CD8-positive, alpha-beta memory T cell (primary cell): ENCODE measurements at regions of chr17 and their contacts with region 1.

Region 1: GRCh38 chr17:79810130-79811010 is 13.5 kb upstream of the CBX8 start:
- DNase-seq: peak; percentile 69 to 85 (median 76)
- H3K4me3 ChIP-seq: no peak overlapping the region
- H3K4me3 Mint-ChIP-seq: peak overlapping the region in 4 of 7 donors; percentile 44 to 83 (median 50)
- H3K27ac ChIP-seq: no peak overlapping the region
- H3K27ac Mint-ChIP-seq: peak overlapping the region in 3 of 8 donors; percentile 21 to 93 (median 66)
- H3K4me1 ChIP-seq: peaks cover 37% of the 10 kb centered on the region
- H3K4me1 Mint-ChIP-seq: peaks cover 21 to 34% (median 30%) of the 10 kb centered on the region in 3 donors
- H3K27me3 ChIP-seq: peaks cover 76% of the 10 kb centered on the region
- H3K27me3 Mint-ChIP-seq: peaks cover 58 to 64% of the 10 kb centered on the region in 2 donors

Region 2: GRCh38 chr17:79796763-79797491 is 13.4 kb before region 1 on chr17 and contains the start of gene CBX8:
- CTCF ChIA-PET with region 1: interaction called, 24 read pairs
- POLR2A ChIA-PET with region 1: interaction called, 7 read pairs
- DNase-seq: peak; percentile 97 to 99 (median 98)
- H3K4me3 ChIP-seq: peak within 1 kb of the TSS; percentile 80
- H3K4me3 Mint-ChIP-seq: peak within 1 kb of the TSS; percentile 85 to 92 (median 86)
- H3K27ac ChIP-seq: peak within 1 kb of the TSS; percentile 73
- H3K27ac Mint-ChIP-seq: peak within 1 kb of the TSS; percentile 50 to 94 (median 88)
- H3K4me1 ChIP-seq: peaks cover 50% of the 10 kb centered on the region
- H3K4me1 Mint-ChIP-seq: peaks cover 31 to 52% (median 34%) of the 10 kb centered on the region in 3 donors
- H3K27me3 ChIP-seq: peaks cover 44% of the 10 kb centered on the region
- H3K27me3 Mint-ChIP-seq: peaks cover 43 to 45% of the 10 kb centered on the region in 2 donors
- total RNA-seq, gene CBX8: 1.9 to 2.2 TPM

Region 3: DNA sequence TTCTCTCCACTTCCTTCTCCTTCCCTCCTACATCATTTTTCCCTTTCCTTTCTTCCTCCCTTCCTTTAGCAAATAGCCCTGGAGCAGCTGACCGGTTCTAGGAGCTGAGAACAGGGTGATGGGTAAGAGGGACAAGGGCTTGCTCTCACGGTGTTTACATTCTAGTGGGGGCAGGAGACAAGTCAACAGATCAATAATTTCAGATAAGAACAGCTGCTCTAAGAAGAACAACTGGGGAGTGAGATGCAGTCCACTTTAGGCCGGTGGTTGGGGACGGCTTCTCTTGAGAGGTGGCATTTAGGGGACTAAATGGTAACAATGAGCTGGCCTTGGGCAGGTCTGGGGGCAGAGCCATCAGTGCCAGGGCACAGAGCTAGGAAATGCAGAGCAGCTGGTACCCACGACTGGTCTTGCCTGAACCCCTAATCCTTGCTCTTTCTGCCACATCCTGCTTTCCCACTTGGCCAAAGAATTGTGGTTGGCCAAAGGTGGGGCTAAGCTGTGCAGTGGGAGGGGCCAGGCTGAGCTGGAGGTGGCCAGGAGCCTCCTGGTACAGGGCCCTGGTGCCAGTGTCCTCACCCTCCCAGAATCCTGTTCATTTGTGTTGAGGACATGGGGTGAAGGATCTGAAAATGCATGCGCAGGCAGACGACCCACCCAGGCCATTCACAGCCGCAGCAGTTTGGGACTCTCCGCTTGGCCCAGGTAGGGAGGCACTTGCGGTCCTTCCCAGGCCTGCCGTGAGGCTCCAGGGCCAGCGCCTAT is 11.1 kb after region 1 on chr17:
- CTCF ChIA-PET with region 1: no interaction called
- POLR2A ChIA-PET with region 1: no interaction called
- DNase-seq: no peak
- H3K4me3 ChIP-seq: no peak overlapping the region
- H3K4me3 Mint-ChIP-seq: no peak overlapping the region
- H3K27ac ChIP-seq: no peak overlapping the region
- H3K27ac Mint-ChIP-seq: no peak overlapping the region
- H3K4me1 ChIP-seq: no peaks in the 10 kb centered on the region
- H3K4me1 Mint-ChIP-seq: peaks cover 0 to 6% (median 4%) of the 10 kb centered on the region in 3 donors
- H3K27me3 ChIP-seq: peaks cover 4% of the 10 kb centered on the region
- H3K27me3 Mint-ChIP-seq: peaks cover 20 to 25% of the 10 kb centered on the region in 2 donors

Region 4: GRCh38 chr17:79965806-79966205 is 155.4 kb after region 1 on chr17:
- CTCF ChIA-PET with region 1: no interaction called
- POLR2A ChIA-PET with region 1: no interaction called
- DNase-seq: peak in 1 of 5 donors; percentile 12
- H3K4me3 ChIP-seq: no peak overlapping the region
- H3K4me3 Mint-ChIP-seq: no peak overlapping the region
- H3K27ac ChIP-seq: no peak overlapping the region
- H3K27ac Mint-ChIP-seq: peak overlapping the region in 1 of 8 donors; percentile 51
- H3K4me1 ChIP-seq: no peaks in the 10 kb centered on the region
- H3K4me1 Mint-ChIP-seq: peaks cover 3 to 8% (median 7%) of the 10 kb centered on the region in 3 donors
- H3K27me3 ChIP-seq: no peaks in the 10 kb centered on the region
- H3K27me3 Mint-ChIP-seq: peaks cover 0 to 20% of the 10 kb centered on the region in 2 donors